B cell (primary cell): ENCODE measurements at regions of chr6 and their contacts with region 1.

Region 1: DNA sequence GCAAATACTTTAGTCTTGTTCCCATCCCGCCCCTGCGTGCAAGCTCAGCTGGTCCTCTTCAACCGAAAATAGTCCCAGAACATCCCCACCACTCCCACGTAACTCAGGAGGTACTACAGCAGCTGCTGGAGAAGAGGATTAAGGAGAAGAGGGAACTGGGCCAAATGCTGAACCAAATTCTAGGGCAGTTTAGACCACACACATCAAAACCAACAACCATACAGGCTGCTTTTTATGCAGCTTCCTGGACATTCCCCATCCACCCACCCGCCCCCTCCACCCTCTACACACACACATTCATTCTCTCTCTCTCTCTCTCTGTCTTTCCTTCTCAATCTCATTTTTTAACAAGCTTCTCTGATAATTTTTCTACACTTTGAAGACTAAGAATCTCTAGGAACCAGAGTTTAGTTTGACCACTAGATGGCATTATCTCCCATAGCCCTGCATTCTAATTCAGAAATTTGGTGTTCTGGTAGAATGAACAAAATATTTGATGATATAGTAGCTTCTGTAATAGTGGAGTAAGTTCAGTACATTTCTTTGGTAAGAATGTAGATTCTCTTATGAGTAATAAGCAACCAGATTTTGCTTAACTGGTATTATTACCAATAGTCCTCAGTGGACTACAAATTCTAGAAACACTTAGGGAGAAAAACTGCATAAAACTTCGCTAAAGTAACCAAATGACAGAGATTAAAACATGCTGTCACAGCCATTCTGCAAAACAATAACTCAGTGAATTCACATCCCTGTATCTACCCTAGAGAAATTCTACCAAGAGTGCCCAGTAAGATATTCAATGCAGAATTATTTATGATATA is 52.1 kb upstream of the BEND6 start:
- DNase-seq: peak; percentile 44
- ATAC-seq: no peak
- H3K4me3 ChIP-seq: no peak overlapping the region
- H3K4me3 Mint-ChIP-seq: no peak overlapping the region
- H3K27ac ChIP-seq: no peak overlapping the region
- H3K27ac Mint-ChIP-seq: no peak overlapping the region
- H3K4me1 ChIP-seq: peaks cover 0 to 4% of the 10 kb centered on the region in 2 donors
- H3K4me1 Mint-ChIP-seq: peaks cover 2% of the 10 kb centered on the region
- H3K27me3 ChIP-seq: peaks cover 0 to 5% (median 0%) of the 10 kb centered on the region in 4 experiments
- H3K27me3 Mint-ChIP-seq: peaks cover 12% of the 10 kb centered on the region
- CTCF ChIP-seq: peak; percentile 77

Region 2: GRCh38 chr6:57021086-57021720 is 118.3 kb after region 1 on chr6:
- CTCF ChIA-PET with region 1: interaction called, 3 read pairs
- POLR2A ChIA-PET with region 1: no interaction called
- intact Hi-C with region 1: loop called (anchors 10 kb)
- DNase-seq: peak; percentile 37
- ATAC-seq: peak; percentile 41
- H3K4me3 ChIP-seq: no peak overlapping the region
- H3K4me3 Mint-ChIP-seq: no peak overlapping the region
- H3K27ac ChIP-seq: no peak overlapping the region
- H3K27ac Mint-ChIP-seq: no peak overlapping the region
- H3K4me1 ChIP-seq: no peaks in the 10 kb centered on the region
- H3K4me1 Mint-ChIP-seq: no peaks in the 10 kb centered on the region
- H3K27me3 ChIP-seq: no peaks in the 10 kb centered on the region
- H3K27me3 Mint-ChIP-seq: peaks cover 10% of the 10 kb centered on the region
- CTCF ChIP-seq: peak; percentile 76

Region 3: GRCh38 chr6:57324538-57324937 is 421.7 kb after region 1 on chr6:
- CTCF ChIA-PET with region 1: interaction called, 53 read pairs
- POLR2A ChIA-PET with region 1: no interaction called
- intact Hi-C with region 1: loop called (anchors 1 kb)
- DNase-seq: peak; percentile 20
- ATAC-seq: no peak
- H3K4me3 ChIP-seq: no peak overlapping the region
- H3K4me3 Mint-ChIP-seq: no peak overlapping the region
- H3K27ac ChIP-seq: no peak overlapping the region
- H3K27ac Mint-ChIP-seq: no peak overlapping the region
- H3K4me1 ChIP-seq: no peaks in the 10 kb centered on the region
- H3K4me1 Mint-ChIP-seq: peaks cover 3% of the 10 kb centered on the region
- H3K27me3 ChIP-seq: no peaks in the 10 kb centered on the region
- H3K27me3 Mint-ChIP-seq: no peaks in the 10 kb centered on the region
- CTCF ChIP-seq: peak; percentile 56